Esophagus muscularis mucosa (tissue), 4 donors: ENCODE measurements at regions of chr11 and their contacts with region 1.

Region 1: GRCh38 chr11:62855571-62856332 is 16.4 kb upstream of the WDR74 start:
- DNase-seq: peak; percentile 99
- H3K4me3 ChIP-seq: peak overlapping the region; percentile 56 to 78 (median 72)
- H3K27ac ChIP-seq: peak overlapping the region; percentile 79 to 85 (median 83)
- H3K4me1 ChIP-seq: peaks cover 25 to 49% (median 39%) of the 10 kb centered on the region in 4 donors
- H3K27me3 ChIP-seq: no peaks in the 10 kb centered on the region
- CTCF ChIP-seq: peak in 1 of 3 experiments; percentile 33
- EP300 ChIP-seq: no peak
- POLR2A ChIP-seq: peak; percentile 90

Region 2: GRCh38 chr11:62591448-62592145 is 264.2 kb before region 1 on chr11 and contains the start of gene TUT1:
- intact Hi-C with region 1: loop called (anchors 10 kb)
- DNase-seq: peak; percentile 99
- H3K4me3 ChIP-seq: peak within 1 kb of the TSS; percentile 72 to 93 (median 76)
- H3K27ac ChIP-seq: peak within 1 kb of the TSS; percentile 92 to 97 (median 94)
- H3K4me1 ChIP-seq: peaks cover 33 to 42% (median 40%) of the 10 kb centered on the region in 4 donors
- H3K27me3 ChIP-seq: no peaks in the 10 kb centered on the region
- CTCF ChIP-seq: peak in 1 of 3 experiments; percentile 4
- EP300 ChIP-seq: no peak
- POLR2A ChIP-seq: peak; percentile 65
- total RNA-seq, gene TUT1: 4.2 to 8.0 (median 6.0) TPM

Region 3: GRCh38 chr11:62880803-62881578 is 25.2 kb after region 1 on chr11 and contains the start of gene SLC3A2:
- intact Hi-C with region 1: loop called (anchors 2 kb)
- DNase-seq: peak; percentile 97
- H3K4me3 ChIP-seq: peak within 1 kb of the TSS; percentile 72 to 100 (median 95)
- H3K27ac ChIP-seq: peak within 1 kb of the TSS; percentile 94 to 100 (median 99)
- H3K4me1 ChIP-seq: peaks cover 39 to 66% (median 62%) of the 10 kb centered on the region in 4 donors
- H3K27me3 ChIP-seq: no peaks in the 10 kb centered on the region
- CTCF ChIP-seq: peak; percentile 69 to 82 (median 75)
- EP300 ChIP-seq: no peak
- POLR2A ChIP-seq: peak; percentile 98
- total RNA-seq, gene SLC3A2: 53.2 to 123 (median 86.4) TPM